Lower leg skin (tissue), 4 donors: ENCODE measurements at regions of chr15 and their contacts with region 1.

Region 1: DNA sequence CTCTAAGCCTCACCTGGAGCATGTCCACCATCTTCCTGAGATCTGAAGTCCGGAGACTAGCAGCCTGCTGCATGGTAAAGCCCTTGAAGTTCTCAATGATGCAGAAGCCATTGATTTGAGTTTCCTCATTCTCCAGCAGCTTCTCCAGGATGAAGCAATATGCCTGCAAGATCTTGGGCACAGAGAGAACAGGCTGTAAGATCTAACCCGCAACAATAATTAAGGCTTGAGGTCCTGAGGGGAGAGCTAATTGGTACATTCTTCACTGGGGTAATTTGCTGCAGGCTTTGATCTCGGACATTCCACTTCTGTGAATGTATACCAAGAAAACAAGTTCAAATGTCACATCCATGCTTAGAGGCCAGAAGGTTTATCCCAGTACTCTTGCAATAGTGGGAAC is 9.6 kb downstream of the RLBP1 start:
- DNase-seq: no peak
- H3K4me3 ChIP-seq: no peak overlapping the region
- CTCF ChIP-seq: no peak
- POLR2A ChIP-seq: no peak

Region 2: DNA sequence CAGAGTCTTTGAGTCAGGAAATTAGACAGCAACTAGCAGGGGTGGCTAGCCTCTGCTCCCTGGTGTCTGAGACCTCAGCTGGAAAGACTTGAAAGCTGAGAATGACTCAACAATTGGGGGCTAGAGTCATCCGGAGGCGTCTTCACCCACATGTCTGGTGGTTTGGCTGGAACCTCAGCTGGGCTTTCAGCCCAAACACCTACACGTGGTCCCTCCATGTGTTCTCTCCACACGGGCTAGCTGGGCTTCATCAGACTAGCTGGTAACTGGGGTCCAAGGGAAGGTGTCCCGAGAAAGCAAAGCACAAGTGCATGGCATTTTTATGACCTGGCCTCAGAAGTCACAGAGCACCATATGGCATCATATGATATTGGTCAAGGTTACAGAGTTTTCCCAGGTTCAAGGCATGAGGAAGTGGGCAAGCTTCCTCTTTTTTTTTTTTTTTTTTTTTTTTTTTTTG is 143.4 kb before region 1 on chr15:
- intact Hi-C with region 1: no loop called
- DNase-seq: peak in 1 of 2 donors; percentile 56
- H3K4me3 ChIP-seq: no peak overlapping the region
- CTCF ChIP-seq: no peak
- POLR2A ChIP-seq: no peak

Region 3: GRCh38 chr15:89299896-89300295 is 88.2 kb after region 1 on chr15:
- intact Hi-C with region 1: loop called (anchors 10 kb)
- DNase-seq: no peak
- H3K4me3 ChIP-seq: no peak overlapping the region
- CTCF ChIP-seq: no peak
- POLR2A ChIP-seq: no peak

Region 4: GRCh38 chr15:89332446-89332845 is 120.7 kb after region 1 on chr15:
- intact Hi-C with region 1: no loop called
- DNase-seq: no peak
- H3K4me3 ChIP-seq: no peak overlapping the region
- CTCF ChIP-seq: no peak
- POLR2A ChIP-seq: no peak

Region 5: GRCh38 chr15:89401631-89402517 is 190.1 kb after region 1 on chr15:
- intact Hi-C with region 1: no loop called
- DNase-seq: no peak
- H3K4me3 ChIP-seq: no peak overlapping the region
- CTCF ChIP-seq: no peak
- POLR2A ChIP-seq: no peak